GM13977 (cell line): ENCODE measurements at regions of chr6 and their contacts with region 1.

Region 1: DNA sequence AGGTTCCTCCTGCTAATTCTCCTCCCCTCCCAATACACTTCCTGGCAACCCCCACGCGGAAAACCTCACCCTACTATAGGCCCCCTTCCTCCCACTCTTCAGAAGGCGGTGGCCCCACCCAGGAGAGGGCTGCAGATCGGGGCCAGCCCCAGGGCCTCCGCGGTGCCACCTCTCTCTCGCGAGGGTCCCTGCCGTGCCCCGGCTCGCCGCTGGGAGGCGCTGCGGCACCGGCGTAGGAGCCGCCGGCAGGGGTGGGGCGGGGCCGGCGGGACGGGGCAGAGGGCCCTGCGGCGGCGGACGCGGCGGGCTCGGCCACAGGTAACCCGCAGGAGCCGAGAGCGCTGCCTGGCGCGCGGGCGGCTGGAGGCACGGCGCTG is at the start of gene ANKRD6:
- DNase-seq: peak; percentile 91
- CTCF ChIP-seq: peak; percentile 97

Region 2: DNA sequence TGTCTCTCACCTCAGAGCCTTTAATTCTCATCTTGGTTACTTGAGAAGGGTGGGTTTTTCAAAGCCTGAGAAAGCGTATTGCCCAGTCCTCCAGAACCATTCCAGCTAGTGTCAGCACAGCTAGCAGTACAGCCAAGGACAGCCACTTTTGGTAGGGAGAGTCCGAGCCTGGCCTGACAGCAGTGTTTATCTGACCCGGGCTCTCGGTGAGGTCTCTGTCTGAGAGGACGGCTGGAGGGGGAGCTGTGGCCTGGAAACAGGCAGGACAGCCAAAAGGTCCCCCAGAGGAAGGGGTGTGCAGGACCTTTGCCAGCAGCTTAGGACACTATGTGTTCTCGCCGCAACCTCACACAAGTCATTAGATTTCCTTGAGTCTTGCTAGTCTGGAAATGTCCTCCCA is 166.9 kb after region 1 on chr6:
- in situ Hi-C with region 1: loop called (anchors 10 kb)
- DNase-seq: no peak
- CTCF ChIP-seq: no peak